ENCODE measurements at regions of chr7 and their contacts with region 1.

Region 1: GRCh38 chr7:98841179-98841997 is 28.4 kb downstream of the TMEM130 start:
- DNase-seq: peak; percentile 32 to 51 (median 51)
- H3K4me3 ChIP-seq: no peak overlapping the region
- H3K4me3 Mint-ChIP-seq: no peak overlapping the region
- H3K27ac ChIP-seq: no peak overlapping the region
- H3K27ac Mint-ChIP-seq: no peak overlapping the region
- H3K4me1 ChIP-seq: no peaks in the 10 kb centered on the region
- H3K4me1 Mint-ChIP-seq: no peaks in the 10 kb centered on the region
- H3K27me3 ChIP-seq: no peaks in the 10 kb centered on the region
- H3K27me3 Mint-ChIP-seq: peaks cover 7 to 14% (median 8%) of the 10 kb centered on the region in 3 donors
- CTCF ChIP-seq: peak; percentile 99

Region 2: DNA sequence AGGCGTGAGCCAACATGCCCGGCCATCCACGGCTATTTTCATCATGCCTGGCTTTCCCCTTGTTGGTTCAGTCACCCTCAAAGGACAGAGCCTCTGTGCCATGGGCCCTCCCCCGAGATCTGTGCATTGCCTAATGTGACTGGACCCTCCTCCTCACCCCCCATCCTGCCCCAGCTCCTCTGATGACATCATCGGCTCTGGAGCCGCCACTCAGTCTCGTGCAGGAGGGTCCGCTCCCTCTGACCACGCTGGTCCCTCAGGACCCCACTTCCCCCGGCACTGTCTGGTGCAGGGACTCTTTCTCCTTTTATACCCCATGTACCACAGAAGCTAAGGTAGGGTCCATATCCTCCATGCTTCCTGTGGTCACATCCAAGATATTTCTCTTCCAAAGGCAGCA is 407.3 kb before region 1 on chr7:
- intact Hi-C with region 1: loop called (anchors 2 kb)
- DNase-seq: no peak
- H3K4me3 ChIP-seq: no peak overlapping the region
- H3K4me3 Mint-ChIP-seq: no peak overlapping the region
- H3K27ac ChIP-seq: no peak overlapping the region
- H3K27ac Mint-ChIP-seq: peak overlapping the region in 1 of 7 donors; percentile 35
- H3K4me1 ChIP-seq: peaks cover 5 to 6% of the 10 kb centered on the region in 2 donors
- H3K4me1 Mint-ChIP-seq: peaks cover 5% of the 10 kb centered on the region
- H3K27me3 ChIP-seq: no peaks in the 10 kb centered on the region
- H3K27me3 Mint-ChIP-seq: peaks cover 4 to 10% (median 7%) of the 10 kb centered on the region in 3 donors
- CTCF ChIP-seq: no peak

Region 3: GRCh38 chr7:98733036-98733435 is 108.4 kb before region 1 on chr7:
- intact Hi-C with region 1: loop called in 1 of 2 experiments (anchors 5 kb)
- DNase-seq: peak; percentile 18 to 49 (median 33)
- H3K4me3 ChIP-seq: no peak overlapping the region
- H3K4me3 Mint-ChIP-seq: no peak overlapping the region
- H3K27ac ChIP-seq: no peak overlapping the region
- H3K27ac Mint-ChIP-seq: no peak overlapping the region
- H3K4me1 ChIP-seq: no peaks in the 10 kb centered on the region
- H3K4me1 Mint-ChIP-seq: no peaks in the 10 kb centered on the region
- H3K27me3 ChIP-seq: no peaks in the 10 kb centered on the region
- H3K27me3 Mint-ChIP-seq: peaks cover 7 to 12% (median 7%) of the 10 kb centered on the region in 3 donors
- CTCF ChIP-seq: peak; percentile 68

Region 4: GRCh38 chr7:98745722-98746318 is 95.6 kb before region 1 on chr7:
- intact Hi-C with region 1: loop called in 1 of 2 experiments (anchors 5 kb)
- DNase-seq: peak; percentile 11 to 41 (median 27)
- H3K4me3 ChIP-seq: no peak overlapping the region
- H3K4me3 Mint-ChIP-seq: no peak overlapping the region
- H3K27ac ChIP-seq: no peak overlapping the region
- H3K27ac Mint-ChIP-seq: no peak overlapping the region
- H3K4me1 ChIP-seq: no peaks in the 10 kb centered on the region
- H3K4me1 Mint-ChIP-seq: no peaks in the 10 kb centered on the region
- H3K27me3 ChIP-seq: no peaks in the 10 kb centered on the region
- H3K27me3 Mint-ChIP-seq: peaks cover 3 to 13% (median 4%) of the 10 kb centered on the region in 3 donors
- CTCF ChIP-seq: peak; percentile 91

Region 5: DNA sequence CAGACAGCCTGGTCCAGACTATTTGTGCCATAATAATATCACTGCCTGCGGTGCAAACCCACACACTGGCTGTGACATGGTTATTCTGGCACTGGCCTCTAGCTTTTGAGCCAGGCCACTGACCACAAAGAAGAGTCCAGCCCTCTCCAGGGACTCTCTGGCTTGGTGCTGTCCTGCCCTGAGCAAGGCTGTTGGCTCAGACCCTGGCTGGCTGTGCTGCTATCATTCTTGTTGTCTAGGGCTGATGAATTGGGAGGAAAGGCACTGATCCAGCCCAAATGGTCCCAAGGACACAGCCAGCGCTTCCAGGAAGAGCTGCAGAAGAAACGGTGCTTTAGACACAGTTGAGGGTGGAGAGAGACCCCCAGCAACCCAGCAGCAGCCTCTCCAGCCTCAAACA is 52.4 kb before region 1 on chr7:
- intact Hi-C with region 1: no loop called
- DNase-seq: no peak
- H3K4me3 ChIP-seq: no peak overlapping the region
- H3K4me3 Mint-ChIP-seq: peak overlapping the region in 1 of 2 donors; percentile 21
- H3K27ac ChIP-seq: no peak overlapping the region
- H3K27ac Mint-ChIP-seq: no peak overlapping the region
- H3K4me1 ChIP-seq: no peaks in the 10 kb centered on the region
- H3K4me1 Mint-ChIP-seq: peaks cover 2% of the 10 kb centered on the region
- H3K27me3 ChIP-seq: no peaks in the 10 kb centered on the region
- H3K27me3 Mint-ChIP-seq: peaks cover 8 to 34% (median 20%) of the 10 kb centered on the region in 3 donors
- CTCF ChIP-seq: no peak

Region 6: DNA sequence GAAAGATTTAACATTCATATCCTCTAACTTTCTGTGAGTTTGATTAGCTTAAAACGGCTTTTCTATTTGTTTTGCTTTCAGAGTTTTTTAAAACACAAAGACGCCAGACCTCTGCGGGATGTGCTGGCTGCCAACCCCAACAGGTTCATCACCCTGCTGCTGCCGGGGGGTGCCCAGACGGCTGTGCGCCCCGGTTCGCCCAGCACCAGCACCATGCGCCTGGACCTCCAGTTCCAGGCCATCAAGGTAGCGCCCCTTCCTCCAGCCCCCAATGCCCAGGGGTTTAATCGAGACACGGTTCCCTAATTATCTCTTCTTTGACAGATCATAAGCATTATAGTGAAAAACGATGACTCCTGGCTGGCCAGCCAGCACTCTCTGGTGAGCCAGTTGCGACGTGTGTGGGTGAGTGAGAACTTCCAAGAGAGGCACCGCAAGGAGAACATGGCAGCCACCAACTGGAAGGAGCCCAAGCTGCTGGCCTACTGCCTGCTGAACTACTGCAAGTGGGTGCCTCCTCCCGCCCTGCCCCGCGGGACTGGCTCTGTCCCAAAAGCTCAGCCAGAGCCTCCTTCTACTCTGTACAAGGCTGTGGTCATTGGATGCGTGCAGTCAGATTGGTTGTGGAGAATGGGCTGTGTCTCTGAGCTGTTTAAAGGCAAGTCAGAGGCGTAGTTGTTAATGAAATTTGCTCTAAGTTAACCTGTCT is 108.1 kb after region 1 on chr7:
- intact Hi-C with region 1: no loop called
- DNase-seq: no peak
- H3K4me3 ChIP-seq: no peak overlapping the region
- H3K4me3 Mint-ChIP-seq: no peak overlapping the region
- H3K27ac ChIP-seq: no peak overlapping the region
- H3K27ac Mint-ChIP-seq: no peak overlapping the region
- H3K4me1 ChIP-seq: no peaks in the 10 kb centered on the region
- H3K4me1 Mint-ChIP-seq: no peaks in the 10 kb centered on the region
- H3K27me3 ChIP-seq: no peaks in the 10 kb centered on the region
- H3K27me3 Mint-ChIP-seq: no peaks in the 10 kb centered on the region
- CTCF ChIP-seq: no peak